Left colon (tissue), 2 donors: ENCODE measurements at regions of chr5 and their contacts with region 1.

Region 1: DNA sequence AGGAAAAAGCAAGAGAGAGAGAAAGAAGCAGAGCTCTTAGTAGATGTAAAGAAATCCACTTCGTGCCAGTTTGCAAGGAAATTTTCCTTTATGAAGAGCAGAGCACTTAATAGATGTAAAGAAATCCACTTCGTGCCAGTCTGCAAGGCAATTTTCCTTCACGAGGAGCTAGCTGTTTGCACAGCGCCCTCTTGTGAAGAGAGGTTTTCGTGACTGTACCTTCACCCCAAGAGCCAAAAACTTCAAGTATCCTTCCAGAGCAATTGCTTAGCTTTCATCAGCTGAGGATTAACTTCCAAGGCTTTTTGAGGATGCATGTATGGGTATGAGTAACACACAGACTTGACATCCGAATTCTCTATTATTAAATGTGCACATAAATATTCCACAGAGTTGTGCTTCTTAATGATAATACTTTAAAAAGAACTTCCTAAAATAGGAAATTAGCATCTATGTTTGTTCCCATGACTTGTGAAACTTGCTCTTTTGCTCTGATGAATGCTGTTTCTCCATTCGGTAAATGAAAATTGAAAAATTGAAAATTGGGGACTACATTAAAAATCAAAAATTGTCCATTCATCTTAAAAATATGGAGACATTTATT is 525.6 kb downstream of the PDE4D start:
- DNase-seq: peak; percentile 49 to 71
- ATAC-seq: peak; percentile 62

Region 2: DNA sequence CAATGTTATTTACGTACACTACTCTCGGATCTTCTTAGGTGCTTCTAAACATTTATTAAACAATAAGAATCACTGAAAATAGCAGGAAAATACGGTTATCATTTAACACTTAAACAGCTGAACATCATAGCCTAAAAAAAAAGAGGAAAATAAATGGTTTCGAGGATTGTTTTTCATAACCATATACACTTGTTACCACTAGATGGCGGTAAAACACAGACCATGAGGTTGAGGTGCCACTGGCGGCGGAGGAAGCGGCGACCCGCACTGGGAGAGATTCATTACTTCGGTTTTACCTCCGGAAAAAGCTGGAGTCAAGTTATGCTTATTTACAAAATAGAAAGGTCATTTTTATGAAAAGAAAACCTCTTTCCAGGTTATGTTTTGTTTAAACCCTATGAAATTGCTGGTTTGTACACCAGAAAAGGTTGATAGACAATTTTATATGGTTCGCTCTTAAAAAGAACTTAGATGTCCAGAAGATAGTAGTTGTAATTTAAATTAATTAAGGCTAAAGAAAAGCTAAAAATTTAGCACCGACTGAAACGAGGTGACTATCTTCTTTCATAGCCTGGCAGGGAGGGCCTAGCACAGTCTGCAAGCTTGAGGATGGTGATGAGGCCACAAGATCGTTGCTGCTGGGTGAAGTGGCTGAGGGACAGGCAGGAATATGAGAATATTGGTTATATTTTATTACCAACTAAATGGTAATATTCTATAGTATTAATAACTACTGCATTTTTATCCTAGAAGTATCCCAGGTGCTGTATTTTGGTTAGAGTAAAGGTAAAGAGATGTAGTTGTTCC is 179.3 kb before region 1 on chr5:
- intact Hi-C with region 1: loop called (anchors 5 to 10 kb)
- DNase-seq: peak; percentile 56 to 71
- ATAC-seq: peak; percentile 82

Region 3: GRCh38 chr5:59193616-59194319 is 174.1 kb before region 1 on chr5:
- intact Hi-C with region 1: loop called (anchors 5 to 10 kb)
- DNase-seq: no peak
- ATAC-seq: no peak